ENCODE measurements at regions of chr18 and their contacts with region 1.

Region 1: GRCh38 chr18:26405190-26405801 is 143.1 kb downstream of the KCTD1 start:
- DNase-seq: no peak
- ATAC-seq: peak; percentile 96
- H3K4me3 ChIP-seq: no peak overlapping the region
- H3K27ac ChIP-seq: no peak overlapping the region
- H3K4me1 ChIP-seq: peaks cover 5% of the 10 kb centered on the region; the same call in 1 of the 2 replicates
- H3K27me3 ChIP-seq: no peaks in the 10 kb centered on the region
- CTCF ChIP-seq: peak; percentile 66 to 75 (median 71); a peak in 5 of 6 replicates
- EP300 ChIP-seq: no peak
- POLR2A ChIP-seq: no peak
- RAD21 ChIP-seq: peak; percentile 85

Region 2: DNA sequence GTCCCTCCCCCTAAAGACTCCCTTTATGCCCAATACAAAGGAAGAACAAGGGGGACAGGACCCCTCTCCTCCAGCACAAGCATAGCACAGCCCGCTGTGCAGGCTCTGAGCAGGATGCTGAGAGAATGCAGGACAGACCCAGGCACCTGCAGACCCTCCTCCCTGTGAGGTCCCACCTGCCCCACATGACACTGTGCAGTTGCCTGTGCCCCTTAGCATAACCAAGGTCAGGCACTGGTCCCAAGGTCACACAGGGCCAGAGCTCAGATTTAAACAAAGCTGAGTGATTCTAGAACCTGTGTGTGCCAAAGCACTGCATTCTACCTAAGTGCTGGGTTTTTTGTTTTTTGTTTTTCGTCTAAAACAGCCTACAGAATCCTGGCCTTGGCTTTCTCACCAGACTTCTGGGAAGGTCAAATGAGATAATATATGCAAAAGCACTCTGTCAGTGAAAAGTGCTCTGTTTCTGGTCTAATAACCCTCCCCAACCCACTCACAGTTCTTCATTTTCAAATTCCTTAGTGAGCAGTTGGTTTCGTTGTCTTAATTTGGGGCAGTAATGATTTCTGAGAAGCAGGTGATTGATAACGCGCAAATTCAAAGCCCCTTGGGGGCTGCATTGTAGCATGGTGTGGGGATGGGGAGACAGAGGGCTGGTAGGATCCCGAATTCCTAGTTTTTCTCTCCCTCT is 17.3 kb after region 1 on chr18:
- CTCF ChIA-PET with region 1: interaction called, 14 read pairs
- POLR2A ChIA-PET with region 1: no interaction called
- RAD21 ChIA-PET with region 1: interaction called, 5 read pairs
- SMC1A ChIA-PET with region 1: interaction called, 3 read pairs
- in situ Hi-C with region 1: no loop called
- intact Hi-C with region 1: no loop called
- DNase-seq: no peak
- ATAC-seq: peak; percentile 74
- H3K4me3 ChIP-seq: no peak overlapping the region
- H3K27ac ChIP-seq: peak overlapping the region; percentile 2; the same call in 1 of the 2 replicates
- H3K4me1 ChIP-seq: peaks cover 27% of the 10 kb centered on the region
- H3K27me3 ChIP-seq: no peaks in the 10 kb centered on the region
- CTCF ChIP-seq: no peak
- EP300 ChIP-seq: no peak
- POLR2A ChIP-seq: no peak
- RAD21 ChIP-seq: no peak

Region 3: DNA sequence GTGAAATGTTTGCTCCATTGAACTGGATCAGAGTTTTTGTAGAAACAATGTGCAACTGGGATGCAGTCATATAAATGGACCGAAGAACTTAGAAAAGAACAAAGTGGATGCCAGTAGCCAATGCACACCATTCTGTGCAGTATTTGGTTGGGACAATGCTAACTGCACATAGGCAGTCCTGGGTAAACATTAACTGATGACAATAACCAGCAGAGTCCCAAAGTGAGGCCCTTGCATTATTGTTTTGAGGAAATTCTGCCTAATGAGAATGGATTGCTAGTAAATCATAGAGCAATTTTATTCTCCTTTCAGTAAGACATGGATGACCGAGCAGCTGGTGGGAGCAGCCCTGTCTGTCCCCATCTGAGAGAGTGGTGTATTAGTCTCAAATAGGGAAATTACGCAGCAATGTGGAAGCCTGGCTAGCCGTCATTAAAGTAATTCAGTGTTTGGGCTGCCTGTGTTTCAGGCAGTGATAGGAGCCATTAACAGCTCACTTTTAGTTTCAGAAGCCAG is 48.1 kb after region 1 on chr18:
- CTCF ChIA-PET with region 1: interaction called, 13 read pairs
- POLR2A ChIA-PET with region 1: no interaction called
- RAD21 ChIA-PET with region 1: interaction called, 9 read pairs
- SMC1A ChIA-PET with region 1: interaction called, 8 read pairs
- in situ Hi-C with region 1: no loop called
- intact Hi-C with region 1: no loop called
- DNase-seq: no peak
- ATAC-seq: peak; percentile 45
- H3K4me3 ChIP-seq: no peak overlapping the region
- H3K27ac ChIP-seq: no peak overlapping the region
- H3K4me1 ChIP-seq: peaks cover 20% of the 10 kb centered on the region
- H3K27me3 ChIP-seq: no peaks in the 10 kb centered on the region
- CTCF ChIP-seq: no peak
- EP300 ChIP-seq: no peak
- POLR2A ChIP-seq: no peak
- RAD21 ChIP-seq: no peak

Region 4: DNA sequence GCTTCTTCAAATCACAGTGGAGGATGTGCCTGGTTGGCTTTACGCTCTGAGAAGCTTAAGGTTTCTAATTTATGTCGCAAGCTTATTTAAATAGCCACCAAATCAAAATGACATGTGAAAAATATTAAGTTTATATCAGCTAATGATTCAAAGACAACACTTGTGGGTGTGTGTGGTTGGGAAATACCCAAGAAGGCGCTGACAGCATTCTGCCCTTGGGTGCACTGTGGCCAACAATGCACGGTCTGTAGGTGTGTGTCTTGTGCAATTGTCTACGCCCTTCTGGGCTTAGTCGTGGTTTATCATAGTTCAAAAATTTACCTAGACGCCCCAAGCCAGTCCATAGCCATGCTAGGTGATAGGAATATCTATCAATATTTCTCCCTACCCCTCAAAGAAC is 82.1 kb after region 1 on chr18:
- CTCF ChIA-PET with region 1: interaction called, 5 read pairs
- POLR2A ChIA-PET with region 1: no interaction called
- RAD21 ChIA-PET with region 1: interaction called, 11 read pairs
- SMC1A ChIA-PET with region 1: interaction called, 7 read pairs
- in situ Hi-C with region 1: no loop called
- intact Hi-C with region 1: no loop called
- DNase-seq: peak; percentile 23
- ATAC-seq: peak; percentile 99
- H3K4me3 ChIP-seq: no peak overlapping the region
- H3K27ac ChIP-seq: no peak overlapping the region
- H3K4me1 ChIP-seq: no peaks in the 10 kb centered on the region
- H3K27me3 ChIP-seq: no peaks in the 10 kb centered on the region
- CTCF ChIP-seq: no peak
- EP300 ChIP-seq: peak in 1 of 2 experiments; percentile 75; a peak in 2 of 4 replicates
- POLR2A ChIP-seq: no peak
- RAD21 ChIP-seq: no peak

Region 5: DNA sequence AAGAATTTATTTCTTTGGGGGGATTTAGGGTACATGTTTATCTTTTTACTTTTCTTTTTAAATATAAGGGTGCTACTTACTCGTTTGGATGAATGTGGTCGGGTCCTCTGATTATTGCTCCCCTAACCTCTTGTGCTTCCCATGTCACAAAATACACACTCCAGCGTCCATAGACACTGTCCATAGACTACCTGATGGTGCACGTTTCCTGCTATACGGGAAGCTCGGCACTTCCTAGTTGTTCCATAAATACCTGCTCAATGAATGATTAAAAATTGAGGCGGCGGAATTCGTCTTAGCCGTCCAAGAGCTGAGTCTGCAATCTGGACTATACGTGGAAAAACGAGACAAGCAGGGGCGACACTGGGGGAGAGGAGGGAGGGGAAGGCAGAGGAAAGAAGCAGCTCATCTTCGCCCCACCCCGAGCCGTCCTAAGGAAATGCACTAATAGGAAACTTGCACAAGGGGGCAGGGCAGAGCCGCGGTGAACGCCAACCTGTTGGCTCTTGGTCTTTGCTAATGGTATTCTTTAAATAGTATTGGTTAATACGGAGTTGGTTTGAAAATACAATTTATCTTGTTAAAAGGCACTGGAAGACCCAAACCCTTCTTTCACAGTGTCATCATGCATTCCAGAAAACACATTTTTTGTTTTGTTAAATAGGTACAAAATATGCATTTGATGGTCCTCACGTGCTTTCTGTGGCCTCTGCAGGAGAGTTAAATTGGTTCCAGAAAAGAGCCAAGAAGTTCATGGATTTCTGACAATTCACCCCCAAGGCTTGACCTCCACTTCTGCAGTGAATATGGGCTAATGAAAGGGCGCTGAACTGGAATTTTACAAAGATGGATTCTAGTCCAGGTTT is 216.1 kb after region 1 on chr18:
- CTCF ChIA-PET with region 1: interaction called, 27 read pairs
- POLR2A ChIA-PET with region 1: no interaction called
- RAD21 ChIA-PET with region 1: interaction called, 8 read pairs
- SMC1A ChIA-PET with region 1: interaction called, 7 read pairs
- in situ Hi-C with region 1: no loop called
- intact Hi-C with region 1: no loop called
- DNase-seq: no peak
- ATAC-seq: peak; percentile 79
- H3K4me3 ChIP-seq: no peak overlapping the region
- H3K27ac ChIP-seq: no peak overlapping the region
- H3K4me1 ChIP-seq: no peaks in the 10 kb centered on the region
- H3K27me3 ChIP-seq: no peaks in the 10 kb centered on the region
- CTCF ChIP-seq: peak; percentile 51 to 56 (median 51); a peak in 5 of 6 replicates
- EP300 ChIP-seq: no peak
- POLR2A ChIP-seq: no peak
- RAD21 ChIP-seq: peak; percentile 76

Region 6: GRCh38 chr18:26978812-26979341 is 573.6 kb after region 1 on chr18:
- CTCF ChIA-PET with region 1: no interaction called
- POLR2A ChIA-PET with region 1: no interaction called
- RAD21 ChIA-PET with region 1: no interaction called
- SMC1A ChIA-PET with region 1: no interaction called
- in situ Hi-C with region 1: loop called (anchors 25 kb)
- intact Hi-C with region 1: no loop called
- DNase-seq: peak; percentile 76
- ATAC-seq: peak; percentile 99
- H3K4me3 ChIP-seq: peak overlapping the region; percentile 82; the same call in 1 of the 2 replicates
- H3K27ac ChIP-seq: peak overlapping the region; percentile 81
- H3K4me1 ChIP-seq: peaks cover 8% of the 10 kb centered on the region; the same call in 1 of the 2 replicates
- H3K27me3 ChIP-seq: no peaks in the 10 kb centered on the region
- CTCF ChIP-seq: no peak
- EP300 ChIP-seq: peak in 1 of 2 experiments; percentile 55; a peak in 1 of 4 replicates
- POLR2A ChIP-seq: peak; percentile 43
- RAD21 ChIP-seq: no peak

Measured in GM12878 (cell line).